Common myeloid progenitor, CD34-positive (primary cell): ENCODE measurements at regions of chr14 and their contacts with region 1.

Region 1: DNA sequence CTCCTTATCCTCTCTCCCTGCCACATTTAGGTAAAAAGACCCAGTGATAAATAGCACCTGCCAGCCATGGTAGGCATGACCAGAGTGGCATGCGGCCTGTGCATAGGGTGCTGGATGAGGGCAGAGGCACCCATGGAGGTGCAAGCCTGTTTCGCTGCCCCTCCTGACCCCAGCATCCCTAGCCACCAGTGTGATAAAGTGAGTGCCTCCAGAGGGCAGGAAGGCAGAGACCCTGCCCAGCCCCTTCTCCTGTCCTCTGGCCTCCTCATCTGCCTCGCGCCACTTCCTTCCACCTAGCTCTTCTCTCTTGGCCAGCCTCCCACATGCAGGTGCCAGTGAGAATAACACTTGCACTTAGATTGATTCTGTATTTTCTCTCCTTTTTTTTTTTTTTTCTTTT is 108.3 kb upstream of the FUT8 start:
- DNase-seq: no peak
- H3K4me3 ChIP-seq: no peak overlapping the region
- H3K27ac ChIP-seq: no peak overlapping the region
- H3K4me1 ChIP-seq: peaks cover 0 to 4% (median 1%) of the 10 kb centered on the region in 4 experiments
- H3K27me3 ChIP-seq: no peaks in the 10 kb centered on the region

Region 2: DNA sequence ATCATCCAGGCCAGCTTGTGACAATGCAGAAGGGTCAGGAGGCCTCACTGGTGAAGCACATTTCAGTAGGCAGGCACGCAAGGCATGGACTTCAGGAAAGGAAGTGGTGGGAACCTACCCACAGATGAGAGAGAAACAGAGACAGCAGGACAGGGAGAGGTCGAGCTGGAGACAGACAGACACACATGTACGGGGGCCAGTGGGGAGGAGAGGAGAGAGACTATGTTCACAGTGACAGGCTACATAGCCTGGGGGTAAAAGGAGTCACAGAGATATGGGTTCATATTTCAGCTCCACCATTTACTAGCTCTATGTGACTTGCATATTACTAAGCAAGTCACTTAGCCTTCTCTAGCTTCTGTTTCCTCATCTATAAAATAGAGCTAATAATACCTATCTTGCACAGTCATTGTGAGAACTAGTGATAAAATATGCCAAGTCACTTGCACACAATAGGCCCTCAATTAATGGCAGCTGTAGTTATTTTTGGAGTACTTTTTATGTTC is 17.2 kb after region 1 on chr14:
- CTCF ChIA-PET with region 1: interaction called, 15 read pairs
- POLR2A ChIA-PET with region 1: no interaction called
- DNase-seq: peak in 1 of 3 donors; percentile 20
- H3K4me3 ChIP-seq: no peak overlapping the region
- H3K27ac ChIP-seq: no peak overlapping the region
- H3K4me1 ChIP-seq: peaks cover 0 to 20% (median 5%) of the 10 kb centered on the region in 4 experiments
- H3K27me3 ChIP-seq: no peaks in the 10 kb centered on the region